ENCODE measurements at regions of chr6 and their contacts with region 1.

Region 1: DNA sequence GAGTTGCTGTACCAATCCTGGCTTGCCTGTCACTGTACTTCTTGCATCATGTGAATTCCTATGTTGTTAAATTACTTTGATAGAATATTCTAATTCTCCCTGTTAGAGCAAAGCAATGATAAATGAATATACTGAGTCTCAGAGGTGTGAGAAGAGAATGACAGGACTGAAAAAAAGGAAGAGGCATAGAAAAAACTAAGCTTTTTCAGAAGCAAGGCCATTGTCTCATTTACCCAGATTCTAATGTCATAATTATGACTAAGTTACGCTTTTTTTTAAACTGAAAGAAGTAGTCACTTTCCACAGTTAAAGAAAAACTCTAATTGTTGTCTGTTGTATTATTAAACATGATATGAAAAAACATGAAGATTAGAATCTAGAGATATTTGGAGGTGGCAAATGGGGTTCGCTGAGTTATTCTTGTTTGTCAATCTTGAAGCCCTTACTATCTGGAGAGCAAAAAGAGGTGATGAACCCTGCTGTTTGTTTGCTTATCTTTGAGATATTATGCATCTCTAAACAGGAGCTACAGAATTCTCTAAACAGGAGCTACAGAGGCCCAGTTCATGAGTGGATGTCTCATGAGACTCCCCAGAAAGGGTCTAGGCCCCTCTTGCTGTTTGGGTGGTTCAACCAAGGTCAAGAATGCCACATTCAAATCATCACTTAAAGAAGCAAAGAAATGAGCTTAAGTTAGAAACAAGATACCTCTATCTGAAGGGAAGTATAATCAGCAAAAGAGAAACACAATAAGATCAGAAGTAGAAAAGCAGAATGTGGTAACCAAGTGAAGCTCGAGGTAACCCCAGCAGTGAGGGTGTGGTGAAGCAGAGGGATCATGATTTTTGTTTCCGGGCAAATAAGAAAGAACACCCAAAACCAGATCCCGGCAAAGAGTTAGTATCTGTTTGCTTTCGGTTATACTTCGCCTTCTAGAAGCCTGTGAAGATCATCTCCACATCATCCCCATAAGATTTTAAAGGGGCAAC is 33.3 kb upstream of the THEMIS start:
- DNase-seq: peak; percentile 79
- H3K4me3 Mint-ChIP-seq: peak overlapping the region; percentile 55
- H3K27ac Mint-ChIP-seq: peak overlapping the region; percentile 97
- H3K4me1 Mint-ChIP-seq: peaks cover 53% of the 10 kb centered on the region
- H3K27me3 Mint-ChIP-seq: no peaks in the 10 kb centered on the region

Region 2: GRCh38 chr6:127841811-127842210 is 92.3 kb before region 1 on chr6:
- CTCF ChIA-PET with region 1: no interaction called
- POLR2A ChIA-PET with region 1: no interaction called
- DNase-seq: no peak
- H3K4me3 Mint-ChIP-seq: no peak overlapping the region
- H3K27ac Mint-ChIP-seq: no peak overlapping the region
- H3K4me1 Mint-ChIP-seq: peaks cover 16% of the 10 kb centered on the region
- H3K27me3 Mint-ChIP-seq: no peaks in the 10 kb centered on the region

Region 3: DNA sequence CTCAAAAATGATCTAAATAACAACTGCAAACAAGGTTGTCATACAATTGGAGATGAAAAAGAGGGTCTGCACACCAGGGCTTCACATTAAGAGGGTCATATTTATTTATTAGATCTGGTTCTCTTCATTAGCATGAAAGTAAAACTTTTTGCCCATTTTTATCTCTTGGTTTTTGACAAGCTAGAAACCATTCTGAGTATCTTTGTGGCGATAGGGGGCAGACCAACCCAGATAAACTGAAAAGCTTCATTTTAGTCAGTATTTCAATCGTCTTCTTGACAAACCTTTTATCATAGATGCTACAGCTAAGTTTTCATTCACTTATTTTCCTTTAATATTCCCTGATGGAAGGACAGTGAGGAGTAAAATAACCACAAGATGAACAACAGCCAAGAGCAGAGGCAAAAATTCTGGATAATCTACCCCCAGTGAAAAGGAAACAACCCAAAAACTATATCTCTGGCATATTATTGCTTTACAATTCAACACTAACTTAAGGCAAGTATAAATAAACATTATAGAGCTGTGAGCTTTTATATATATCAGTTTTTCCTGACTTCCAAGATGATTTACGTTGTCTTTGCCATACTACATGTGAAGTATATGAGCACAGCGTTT is 78.5 kb before region 1 on chr6:
- CTCF ChIA-PET with region 1: no interaction called
- POLR2A ChIA-PET with region 1: no interaction called
- DNase-seq: peak; percentile 55
- H3K4me3 Mint-ChIP-seq: no peak overlapping the region
- H3K27ac Mint-ChIP-seq: peak overlapping the region; percentile 44
- H3K4me1 Mint-ChIP-seq: peaks cover 57% of the 10 kb centered on the region
- H3K27me3 Mint-ChIP-seq: no peaks in the 10 kb centered on the region

Region 4: DNA sequence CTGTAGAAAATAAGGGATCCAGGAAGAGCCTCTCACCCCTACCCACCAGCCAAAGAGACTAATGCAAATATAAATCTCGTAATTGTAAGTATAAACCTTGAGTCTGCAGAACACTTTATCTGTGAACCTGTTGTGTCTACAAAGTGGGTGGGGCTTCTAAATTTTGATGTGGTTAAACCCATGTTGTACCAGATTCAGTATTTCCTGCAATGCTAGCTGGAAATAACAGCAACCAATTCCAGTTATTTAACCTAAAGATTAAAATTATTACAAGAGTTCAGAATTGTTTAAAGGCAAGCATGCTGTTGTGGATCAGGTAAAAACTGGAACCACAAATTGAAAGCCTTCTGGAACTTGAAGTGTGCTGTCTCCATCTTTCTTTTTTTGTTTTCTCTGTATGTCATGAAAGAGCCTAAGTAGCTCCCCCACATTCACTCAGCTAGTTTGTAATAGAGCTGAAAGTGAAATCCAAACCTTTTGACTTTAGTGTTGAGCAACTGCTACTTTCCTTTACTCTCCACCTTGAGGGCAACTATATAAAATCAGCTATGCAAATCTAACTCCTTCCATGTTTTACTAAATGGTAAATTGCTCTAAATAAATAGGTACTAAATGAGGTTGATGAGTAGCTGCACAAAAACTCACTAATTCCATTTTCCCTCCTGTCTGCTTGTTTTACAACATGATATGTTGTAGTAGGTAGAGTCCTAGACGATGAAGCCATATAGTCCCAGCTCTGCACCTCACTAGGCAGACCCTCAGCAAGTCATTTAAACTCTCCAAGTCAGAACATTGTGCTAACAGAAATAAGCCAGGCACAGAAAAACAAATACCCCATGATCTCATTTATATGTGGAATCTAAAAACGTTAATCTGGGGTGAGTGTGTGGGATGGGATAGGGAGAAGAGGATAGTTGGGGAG is 15.4 kb before region 1 on chr6:
- CTCF ChIA-PET with region 1: interaction called, 13 read pairs
- POLR2A ChIA-PET with region 1: interaction called, 3 read pairs
- DNase-seq: peak; percentile 62
- H3K4me3 Mint-ChIP-seq: peak overlapping the region; percentile 93
- H3K27ac Mint-ChIP-seq: peak overlapping the region; percentile 89
- H3K4me1 Mint-ChIP-seq: peaks cover 84% of the 10 kb centered on the region
- H3K27me3 Mint-ChIP-seq: no peaks in the 10 kb centered on the region

Measured in activated CD4-positive, alpha-beta T cell treated with anti-CD3 and anti-CD28 coated beads, Interleukin-2, amount 10 ng/mL, durations not matched to agents 7 days and 5 days (primary cell).